Dendritic cell treated with granulocyte-macrophage colony-stimulating factor and Interleukin-4, amounts not matched to agents 40 ng/mL and 50 ng/mL, for 4 days (primary cell): ENCODE measurements at regions of chr17 and their contacts with region 1.

Region 1: DNA sequence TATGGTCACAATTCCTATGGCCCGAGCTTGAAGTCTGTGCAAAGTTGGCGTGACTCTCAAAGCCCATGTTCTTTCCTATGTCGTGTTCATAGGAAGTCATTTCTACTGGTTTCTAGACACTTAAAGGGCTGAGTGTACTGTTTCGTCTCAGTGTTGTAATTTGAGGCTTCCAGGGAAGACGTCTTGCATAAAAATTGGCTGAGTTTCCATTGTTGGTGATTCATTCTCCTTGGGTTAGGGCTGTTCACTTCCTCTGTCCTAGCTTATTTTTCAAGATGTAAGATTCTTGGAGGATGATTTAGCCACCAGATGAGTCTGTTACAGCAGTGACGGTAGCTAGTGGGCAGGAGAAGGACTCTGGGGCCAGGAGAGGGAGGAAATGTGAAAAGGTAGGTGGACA is 43.1 kb downstream of the PIK3R5 start:
- H3K4me3 Mint-ChIP-seq: peak overlapping the region; percentile 69
- H3K27ac Mint-ChIP-seq: no peak overlapping the region
- H3K4me1 Mint-ChIP-seq: peaks cover 22% of the 10 kb centered on the region
- H3K27me3 Mint-ChIP-seq: no peaks in the 10 kb centered on the region

Region 2: GRCh38 chr17:8954339-8954738 is 31.9 kb after region 1 on chr17:
- intact Hi-C with region 1: loop called (anchors 2 kb)
- H3K4me3 Mint-ChIP-seq: peak overlapping the region; percentile 82
- H3K27ac Mint-ChIP-seq: peak overlapping the region; percentile 74
- H3K4me1 Mint-ChIP-seq: peaks cover 89% of the 10 kb centered on the region
- H3K27me3 Mint-ChIP-seq: no peaks in the 10 kb centered on the region

Region 3: GRCh38 chr17:8965394-8966168 is 43.1 kb after region 1 on chr17 and contains the start of gene PIK3R5:
- intact Hi-C with region 1: loop called (anchors 5 kb)
- H3K4me3 Mint-ChIP-seq: peak within 1 kb of the TSS; percentile 98
- H3K27ac Mint-ChIP-seq: peak within 1 kb of the TSS; percentile 89
- H3K4me1 Mint-ChIP-seq: peaks cover 84% of the 10 kb centered on the region
- H3K27me3 Mint-ChIP-seq: no peaks in the 10 kb centered on the region